ENCODE measurements at regions of chr12 and their contacts with region 1.

Region 1: GRCh38 chr12:103503977-103504376 is 8.2 kb upstream of the C12orf42 start:
- DNase-seq: peak; percentile 86
- H3K4me3 Mint-ChIP-seq: no peak overlapping the region
- H3K27ac Mint-ChIP-seq: no peak overlapping the region
- H3K4me1 Mint-ChIP-seq: peaks cover 34% of the 10 kb centered on the region
- H3K27me3 Mint-ChIP-seq: peaks cover 13% of the 10 kb centered on the region

Region 2: DNA sequence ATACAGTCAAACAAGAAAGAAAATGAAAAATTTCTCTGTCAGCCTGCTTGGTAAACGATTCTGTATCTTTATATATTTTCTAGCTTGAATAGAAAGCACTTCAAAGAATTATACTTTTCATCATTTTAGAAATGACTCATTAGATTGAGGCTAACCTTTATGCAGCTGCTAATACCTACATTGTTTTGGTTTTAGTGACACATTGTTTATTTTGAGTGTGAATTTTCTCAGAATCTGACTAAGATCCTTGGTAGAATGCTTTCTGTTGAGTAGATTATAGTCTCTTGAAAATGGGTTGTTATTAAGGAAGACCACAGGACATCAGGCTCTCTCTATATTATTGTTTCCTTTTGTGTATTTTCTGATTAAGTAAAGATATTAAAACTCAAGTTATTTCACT is 1306.2 kb before region 1 on chr12 and contains the start of gene PMCH:
- intact Hi-C with region 1: loop called (anchors 10 kb)
- DNase-seq: no peak
- H3K4me3 Mint-ChIP-seq: peak within 1 kb of the TSS; percentile 35
- H3K27ac Mint-ChIP-seq: peak within 1 kb of the TSS; percentile 87
- H3K4me1 Mint-ChIP-seq: peaks cover 17% of the 10 kb centered on the region
- H3K27me3 Mint-ChIP-seq: no peaks in the 10 kb centered on the region
- total RNA-seq, gene PMCH: 6.3 and 8.4 TPM in 2 replicates

Region 3: GRCh38 chr12:103102225-103102744 is 401.7 kb before region 1 on chr12:
- intact Hi-C with region 1: loop called (anchors 10 kb)
- DNase-seq: no peak
- H3K4me3 Mint-ChIP-seq: no peak overlapping the region
- H3K27ac Mint-ChIP-seq: peak overlapping the region; percentile 30
- H3K4me1 Mint-ChIP-seq: no peaks in the 10 kb centered on the region
- H3K27me3 Mint-ChIP-seq: no peaks in the 10 kb centered on the region

Region 4: GRCh38 chr12:103441437-103442181 is 62.4 kb before region 1 on chr12:
- intact Hi-C with region 1: loop called (anchors 1 kb)
- DNase-seq: peak; percentile 87
- H3K4me3 Mint-ChIP-seq: peak overlapping the region; percentile 81
- H3K27ac Mint-ChIP-seq: peak overlapping the region; percentile 89
- H3K4me1 Mint-ChIP-seq: peaks cover 13% of the 10 kb centered on the region
- H3K27me3 Mint-ChIP-seq: no peaks in the 10 kb centered on the region

Region 5: GRCh38 chr12:103523771-103524170 is 19.8 kb after region 1 on chr12:
- intact Hi-C with region 1: no loop called
- DNase-seq: no peak
- H3K4me3 Mint-ChIP-seq: no peak overlapping the region
- H3K27ac Mint-ChIP-seq: no peak overlapping the region
- H3K4me1 Mint-ChIP-seq: no peaks in the 10 kb centered on the region
- H3K27me3 Mint-ChIP-seq: no peaks in the 10 kb centered on the region

Region 6: DNA sequence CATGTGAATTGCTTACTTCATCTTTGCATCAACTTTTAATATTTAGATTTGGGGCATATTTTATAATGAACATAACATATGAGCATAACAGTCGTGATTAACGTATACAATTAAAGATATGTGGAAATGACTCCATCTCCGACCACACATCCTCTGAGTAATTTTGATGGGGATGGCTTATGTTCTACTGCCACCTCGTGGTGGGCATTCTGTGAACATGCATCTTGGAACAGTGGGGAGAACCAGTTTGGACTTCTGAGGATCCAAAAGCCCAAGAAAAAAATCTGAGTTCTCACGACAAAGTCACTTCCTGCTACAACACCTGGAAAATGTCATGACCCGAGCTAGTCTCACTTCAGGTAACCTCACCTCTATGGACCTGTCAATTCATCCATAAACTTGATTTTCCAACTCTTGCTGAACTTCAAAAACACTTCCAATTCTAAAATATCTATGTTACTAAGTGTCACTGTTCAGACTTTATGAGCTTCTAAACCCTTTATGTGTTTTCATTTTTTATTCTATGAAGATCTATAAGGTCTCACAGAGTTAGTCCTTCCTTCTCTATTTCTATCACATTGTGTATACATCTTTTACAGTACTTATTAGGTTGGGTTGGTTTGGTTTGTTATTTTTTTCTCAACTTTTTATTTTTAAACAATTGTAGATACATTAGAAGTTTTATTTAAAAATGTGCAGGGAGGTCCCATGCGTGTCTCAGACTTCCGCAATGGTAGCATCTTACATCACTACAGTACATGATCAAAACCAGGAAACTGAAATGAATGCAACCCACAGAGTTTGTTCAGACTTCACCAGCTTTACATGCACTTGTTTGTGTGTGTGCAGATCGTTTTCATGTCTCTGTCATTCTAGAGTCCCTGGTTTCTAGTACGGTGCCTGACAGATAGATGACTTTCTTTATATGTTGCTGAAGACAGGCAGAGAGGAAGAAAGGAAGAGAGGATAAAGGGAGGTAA is 44.9 kb after region 1 on chr12:
- intact Hi-C with region 1: no loop called
- DNase-seq: peak; percentile 91
- H3K4me3 Mint-ChIP-seq: no peak overlapping the region
- H3K27ac Mint-ChIP-seq: no peak overlapping the region
- H3K4me1 Mint-ChIP-seq: peaks cover 3% of the 10 kb centered on the region
- H3K27me3 Mint-ChIP-seq: peaks cover 11% of the 10 kb centered on the region

Region 7: GRCh38 chr12:103930034-103930786 is 426.2 kb after region 1 on chr12 and contains the start of gene HSP90B1:
- intact Hi-C with region 1: loop called (anchors 5 kb)
- DNase-seq: peak; percentile 100
- H3K4me3 Mint-ChIP-seq: peak within 1 kb of the TSS; percentile 90
- H3K27ac Mint-ChIP-seq: peak within 1 kb of the TSS; percentile 99
- H3K4me1 Mint-ChIP-seq: peaks cover 63% of the 10 kb centered on the region
- H3K27me3 Mint-ChIP-seq: peaks cover 3% of the 10 kb centered on the region
- total RNA-seq, gene HSP90B1: 449 and 457 TPM in 2 replicates